ENCODE measurements at regions of chr10 and their contacts with region 1.

Region 1: DNA sequence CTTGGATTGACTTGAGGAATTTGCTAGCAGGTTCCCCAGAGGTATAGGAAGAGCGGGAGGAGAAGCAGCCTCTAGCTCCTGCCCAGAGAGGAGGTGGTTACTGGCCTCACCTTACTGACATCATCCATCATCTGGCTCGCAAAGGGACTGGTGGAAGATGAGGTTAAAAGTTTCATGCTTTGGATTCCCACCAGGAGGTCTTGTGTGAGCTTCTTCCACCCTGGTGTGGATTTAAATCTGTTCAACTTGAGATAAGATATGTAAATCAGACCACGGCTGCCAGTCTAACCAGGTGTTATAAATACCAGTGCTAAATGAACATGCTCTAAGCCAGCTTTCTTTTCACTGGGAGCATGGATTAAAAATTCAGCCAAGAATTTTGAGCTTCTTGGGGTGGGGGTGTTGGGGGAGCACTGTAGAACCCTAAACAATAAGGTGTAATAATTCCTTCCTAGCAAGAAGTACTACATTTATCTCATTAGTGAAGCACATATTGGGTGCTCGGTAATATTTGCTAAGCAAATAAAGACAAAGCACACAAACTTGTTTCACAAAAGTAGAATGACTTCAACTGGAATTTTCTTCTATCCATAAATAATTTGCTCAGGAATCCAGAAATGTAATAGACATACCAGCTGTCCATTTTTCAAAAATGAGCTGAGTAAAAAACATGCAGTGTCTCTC is 7.8 kb downstream of the PROSER2 start:
- DNase-seq: peak; percentile 34
- H3K4me3 Mint-ChIP-seq: peak overlapping the region; percentile 59
- H3K27ac Mint-ChIP-seq: peak overlapping the region; percentile 97
- H3K4me1 Mint-ChIP-seq: peaks cover 53% of the 10 kb centered on the region
- H3K27me3 Mint-ChIP-seq: no peaks in the 10 kb centered on the region
- CTCF ChIP-seq: no peak

Region 2: DNA sequence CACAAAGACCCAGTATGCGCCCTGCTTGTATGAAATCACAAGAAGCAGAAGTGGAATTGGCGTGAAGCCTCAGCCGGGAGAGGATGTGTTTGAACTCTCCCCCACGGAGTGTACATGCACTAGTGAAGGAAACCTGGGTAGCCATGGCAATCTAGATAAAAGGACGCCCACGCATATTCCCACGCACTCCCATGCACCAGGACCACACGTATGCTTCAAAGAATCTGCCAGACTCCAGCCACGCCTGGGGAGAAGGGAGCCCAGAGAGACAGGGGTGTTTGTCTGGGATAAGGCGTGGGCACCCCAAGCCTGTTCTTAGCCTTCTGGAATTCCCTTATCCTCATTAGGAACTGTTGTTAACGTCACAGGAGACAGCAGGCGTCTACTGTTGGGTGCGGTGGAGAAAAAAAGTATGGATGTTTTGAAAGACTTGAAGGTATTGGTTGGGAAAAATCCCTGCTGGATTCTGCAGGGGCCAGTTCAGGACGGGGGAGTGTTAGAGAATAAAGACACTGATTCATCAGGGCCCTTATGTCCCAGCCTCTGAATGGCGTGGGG is 117.7 kb before region 1 on chr10:
- CTCF ChIA-PET with region 1: no interaction called
- intact Hi-C with region 1: no loop called
- DNase-seq: no peak
- H3K4me3 Mint-ChIP-seq: no peak overlapping the region
- H3K27ac Mint-ChIP-seq: no peak overlapping the region
- H3K4me1 Mint-ChIP-seq: peaks cover 19% of the 10 kb centered on the region
- H3K27me3 Mint-ChIP-seq: no peaks in the 10 kb centered on the region
- CTCF ChIP-seq: no peak

Region 3: GRCh38 chr10:11853468-11853867 is 22.5 kb after region 1 on chr10:
- CTCF ChIA-PET with region 1: no interaction called
- intact Hi-C with region 1: no loop called
- DNase-seq: no peak
- H3K4me3 Mint-ChIP-seq: no peak overlapping the region
- H3K27ac Mint-ChIP-seq: no peak overlapping the region
- H3K4me1 Mint-ChIP-seq: no peaks in the 10 kb centered on the region
- H3K27me3 Mint-ChIP-seq: no peaks in the 10 kb centered on the region
- CTCF ChIP-seq: no peak

Region 4: DNA sequence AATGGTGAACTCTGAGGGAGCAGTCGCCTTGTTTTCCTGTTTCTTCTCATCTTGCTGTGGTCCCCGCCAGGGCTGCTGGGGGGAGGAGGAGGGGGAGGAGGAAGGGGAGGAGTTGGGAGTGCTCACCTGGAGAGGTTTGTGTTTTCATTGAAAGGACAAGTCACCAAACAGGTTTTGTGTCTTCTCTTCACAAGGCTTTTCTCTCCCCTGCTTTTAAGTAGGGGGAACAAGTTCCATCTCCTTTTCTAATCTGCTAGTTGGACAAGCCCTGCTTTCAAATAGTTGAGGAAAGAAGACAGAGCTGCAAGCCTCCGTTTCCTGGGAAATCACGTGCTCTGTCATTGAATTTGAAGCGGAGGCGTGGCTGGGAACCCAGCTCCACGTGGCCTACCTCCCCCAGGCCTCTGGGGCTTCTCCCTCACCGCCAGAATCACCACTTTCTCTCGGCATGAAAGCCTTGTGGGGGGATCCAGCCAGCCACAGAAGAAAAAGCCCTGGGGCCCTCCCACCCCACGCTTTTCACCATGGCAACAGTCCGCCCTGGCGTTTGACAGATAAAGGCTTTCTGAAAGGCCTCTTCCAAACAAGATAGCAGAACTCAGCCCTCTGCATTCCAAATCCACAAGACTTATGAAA is 43.7 kb after region 1 on chr10:
- CTCF ChIA-PET with region 1: no interaction called
- intact Hi-C with region 1: loop called (anchors 2 kb)
- DNase-seq: peak; percentile 74
- H3K4me3 Mint-ChIP-seq: peak overlapping the region; percentile 66
- H3K27ac Mint-ChIP-seq: peak overlapping the region; percentile 90
- H3K4me1 Mint-ChIP-seq: peaks cover 40% of the 10 kb centered on the region
- H3K27me3 Mint-ChIP-seq: no peaks in the 10 kb centered on the region
- CTCF ChIP-seq: no peak

Measured in Calu3 (cell line).